Panc1 (cell line): ENCODE measurements at regions of chr14 and their contacts with region 1.

Region 1: DNA sequence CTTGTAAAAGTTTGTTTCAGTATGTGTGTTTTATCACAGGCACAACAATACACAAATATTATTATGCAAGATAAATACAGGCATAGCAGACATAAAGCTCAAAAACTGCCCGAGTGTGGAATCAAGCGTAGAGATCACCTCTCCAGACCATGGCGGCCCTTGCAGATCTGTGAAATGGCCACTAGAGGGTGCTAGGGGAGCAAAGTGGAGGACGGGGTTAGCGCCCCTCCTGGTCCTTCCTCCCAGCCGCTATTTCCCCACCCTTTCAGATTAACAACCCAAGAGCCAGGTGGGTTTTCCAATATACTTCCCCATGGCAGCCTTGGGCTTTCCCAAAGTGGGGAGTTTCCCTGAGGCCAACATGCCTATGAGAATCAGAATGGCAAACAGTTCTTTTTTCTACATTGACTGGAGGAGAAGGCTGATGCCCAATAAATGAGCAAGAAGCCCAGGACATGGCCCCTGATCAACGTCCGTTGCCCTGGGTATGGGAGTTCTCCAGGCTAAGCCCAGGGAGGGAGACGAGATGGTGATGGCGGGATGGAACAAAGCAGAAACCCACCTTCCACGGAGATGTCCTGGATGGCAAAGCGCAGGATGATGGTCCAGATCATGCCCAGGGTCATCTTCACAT is 67.4 kb downstream of the ACTN1 start:
- DNase-seq: peak; percentile 38
- ATAC-seq: peak; percentile 92
- H3K4me3 ChIP-seq: no peak overlapping the region
- H3K27ac ChIP-seq: no peak overlapping the region
- H3K4me1 ChIP-seq: no peaks in the 10 kb centered on the region
- H3K27me3 ChIP-seq: no peaks in the 10 kb centered on the region
- CTCF ChIP-seq: peak; percentile 96

Region 2: GRCh38 chr14:68854421-68854820 is 57.3 kb before region 1 on chr14:
- CTCF ChIA-PET with region 1: no interaction called
- POLR2A ChIA-PET with region 1: no interaction called
- in situ Hi-C with region 1: no loop called
- intact Hi-C with region 1: no loop called
- DNase-seq: no peak
- ATAC-seq: no peak
- H3K4me3 ChIP-seq: no peak overlapping the region
- H3K27ac ChIP-seq: no peak overlapping the region
- H3K4me1 ChIP-seq: no peaks in the 10 kb centered on the region
- H3K27me3 ChIP-seq: no peaks in the 10 kb centered on the region
- CTCF ChIP-seq: no peak

Region 3: DNA sequence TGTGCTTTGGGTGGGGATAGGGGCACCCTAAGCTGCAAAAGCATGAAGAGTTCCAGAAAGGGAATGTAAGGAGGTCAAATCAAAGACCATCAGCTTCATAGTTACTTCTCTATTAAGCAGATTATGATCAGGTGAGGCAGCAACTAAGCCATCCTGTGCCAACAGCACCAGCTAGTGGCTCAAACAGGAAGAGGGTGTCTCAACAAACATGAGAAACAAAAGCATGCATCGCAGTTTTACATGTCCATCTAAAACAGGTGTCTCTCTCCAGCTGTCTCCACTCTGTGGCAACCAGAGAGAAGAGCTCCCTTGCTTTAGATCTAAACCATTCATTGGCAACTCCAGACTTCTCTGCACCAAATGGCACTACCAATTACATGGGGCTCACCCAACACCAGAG is 14.5 kb after region 1 on chr14:
- CTCF ChIA-PET with region 1: no interaction called
- POLR2A ChIA-PET with region 1: no interaction called
- in situ Hi-C with region 1: no loop called
- intact Hi-C with region 1: no loop called
- DNase-seq: no peak
- ATAC-seq: no peak
- H3K4me3 ChIP-seq: no peak overlapping the region
- H3K27ac ChIP-seq: no peak overlapping the region
- H3K4me1 ChIP-seq: peaks cover 10% of the 10 kb centered on the region
- H3K27me3 ChIP-seq: no peaks in the 10 kb centered on the region
- CTCF ChIP-seq: no peak; the same call in 1 of the 2 replicates

Region 4: GRCh38 chr14:69101331-69101826 is 189.7 kb after region 1 on chr14:
- CTCF ChIA-PET with region 1: interaction called, 5 read pairs
- POLR2A ChIA-PET with region 1: interaction called, 9 read pairs
- in situ Hi-C with region 1: no loop called
- intact Hi-C with region 1: loop called (anchors 5 kb)
- DNase-seq: no peak
- ATAC-seq: no peak
- H3K4me3 ChIP-seq: no peak overlapping the region
- H3K27ac ChIP-seq: no peak overlapping the region; the same call in 1 of the 2 replicates
- H3K4me1 ChIP-seq: no peaks in the 10 kb centered on the region; the same call in none of the 2 replicates
- H3K27me3 ChIP-seq: no peaks in the 10 kb centered on the region
- CTCF ChIP-seq: peak; percentile 46; the same call in 1 of the 2 replicates

Region 5: GRCh38 chr14:69214393-69214792 is 302.7 kb after region 1 on chr14:
- CTCF ChIA-PET with region 1: no interaction called
- POLR2A ChIA-PET with region 1: no interaction called
- in situ Hi-C with region 1: no loop called
- intact Hi-C with region 1: no loop called
- DNase-seq: no peak
- ATAC-seq: no peak
- H3K4me3 ChIP-seq: no peak overlapping the region
- H3K27ac ChIP-seq: no peak overlapping the region
- H3K4me1 ChIP-seq: no peaks in the 10 kb centered on the region
- H3K27me3 ChIP-seq: no peaks in the 10 kb centered on the region
- CTCF ChIP-seq: no peak

Region 6: GRCh38 chr14:69441948-69442347 is 530.2 kb after region 1 on chr14:
- CTCF ChIA-PET with region 1: no interaction called
- POLR2A ChIA-PET with region 1: no interaction called
- in situ Hi-C with region 1: no loop called
- intact Hi-C with region 1: no loop called
- DNase-seq: no peak
- ATAC-seq: no peak
- H3K4me3 ChIP-seq: no peak overlapping the region
- H3K27ac ChIP-seq: no peak overlapping the region
- H3K4me1 ChIP-seq: no peaks in the 10 kb centered on the region
- H3K27me3 ChIP-seq: no peaks in the 10 kb centered on the region
- CTCF ChIP-seq: no peak